Activated CD4-positive, alpha-beta memory T cell treated with anti-CD3 and anti-CD28 coated beads for 36 hours (primary cell): ENCODE measurements at regions of chr3 and their contacts with region 1.

Region 1: GRCh38 chr3:100708967-100709841 is at the start of gene TFG:
- DNase-seq: peak; percentile 98
- H3K4me3 Mint-ChIP-seq: peak within 1 kb of the TSS; percentile 81
- H3K27ac Mint-ChIP-seq: peak within 1 kb of the TSS; percentile 95
- H3K4me1 Mint-ChIP-seq: peaks cover 40% of the 10 kb centered on the region
- H3K27me3 Mint-ChIP-seq: peaks cover 9% of the 10 kb centered on the region
- total RNA-seq, gene TFG: 55.5 to 60.3 TPM

Region 2: GRCh38 chr3:99875929-99876841 is 833.0 kb before region 1 on chr3:
- CTCF ChIA-PET with region 1: no interaction called
- POLR2A ChIA-PET with region 1: no interaction called
- intact Hi-C with region 1: loop called (anchors 5 kb)
- DNase-seq: peak; percentile 73
- H3K4me3 Mint-ChIP-seq: peak overlapping the region; percentile 65
- H3K27ac Mint-ChIP-seq: no peak overlapping the region
- H3K4me1 Mint-ChIP-seq: peaks cover 27% of the 10 kb centered on the region
- H3K27me3 Mint-ChIP-seq: peaks cover 2% of the 10 kb centered on the region

Region 3: DNA sequence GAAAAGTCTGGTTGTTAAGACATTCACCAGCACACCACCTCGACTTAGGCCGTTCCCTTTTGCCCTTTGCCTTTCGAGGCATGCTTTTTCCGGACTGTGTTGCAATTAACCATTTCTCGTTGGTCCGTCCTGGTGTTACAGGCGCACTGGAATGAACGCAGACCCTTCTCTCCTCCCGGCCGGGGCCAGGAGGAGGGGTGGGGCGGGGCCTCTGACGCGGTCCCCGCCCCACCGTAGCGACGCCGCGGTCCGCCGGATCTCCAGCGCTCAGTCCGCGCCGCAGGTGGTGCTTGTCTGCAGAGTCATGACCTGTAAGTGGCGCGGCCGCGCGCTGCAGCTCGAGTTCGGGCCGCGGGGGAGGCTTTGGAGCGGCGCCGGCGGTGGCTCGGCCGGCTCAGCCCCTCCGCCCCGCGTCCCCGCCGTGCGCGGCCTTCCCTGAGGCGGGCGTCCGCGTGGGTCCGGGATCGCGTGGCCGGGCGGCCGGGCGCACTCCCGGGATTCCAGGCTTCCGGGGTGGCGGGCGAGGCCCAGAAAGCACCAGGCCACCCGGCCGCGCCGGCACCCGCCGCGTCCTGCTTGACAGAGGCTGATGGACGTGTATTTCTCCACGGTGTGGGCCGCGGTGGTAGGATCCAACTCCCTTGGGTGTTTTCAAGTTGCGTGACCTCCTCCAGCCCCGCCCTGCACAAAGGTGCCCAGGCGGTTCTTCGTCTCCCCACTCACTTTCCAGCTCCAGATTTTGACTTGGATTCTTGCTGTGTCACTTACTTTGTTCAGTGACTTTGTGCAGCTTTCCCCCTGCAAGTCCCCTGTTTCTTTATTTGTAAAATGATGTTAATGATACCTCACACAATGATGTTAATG is 374.5 kb before region 1 on chr3 and contains the start of gene NIT2:
- CTCF ChIA-PET with region 1: no interaction called
- POLR2A ChIA-PET with region 1: no interaction called
- intact Hi-C with region 1: loop called (anchors 2 kb)
- DNase-seq: peak; percentile 87
- H3K4me3 Mint-ChIP-seq: peak within 1 kb of the TSS; percentile 86
- H3K27ac Mint-ChIP-seq: peak within 1 kb of the TSS; percentile 84
- H3K4me1 Mint-ChIP-seq: peaks cover 21% of the 10 kb centered on the region
- H3K27me3 Mint-ChIP-seq: no peaks in the 10 kb centered on the region
- total RNA-seq, gene NIT2: 65.3 to 65.7 TPM

Region 4: GRCh38 chr3:100449214-100449613 is 260.0 kb before region 1 on chr3:
- CTCF ChIA-PET with region 1: no interaction called
- POLR2A ChIA-PET with region 1: no interaction called
- intact Hi-C with region 1: no loop called
- DNase-seq: no peak
- H3K4me3 Mint-ChIP-seq: no peak overlapping the region
- H3K27ac Mint-ChIP-seq: no peak overlapping the region
- H3K4me1 Mint-ChIP-seq: no peaks in the 10 kb centered on the region
- H3K27me3 Mint-ChIP-seq: no peaks in the 10 kb centered on the region

Region 5: DNA sequence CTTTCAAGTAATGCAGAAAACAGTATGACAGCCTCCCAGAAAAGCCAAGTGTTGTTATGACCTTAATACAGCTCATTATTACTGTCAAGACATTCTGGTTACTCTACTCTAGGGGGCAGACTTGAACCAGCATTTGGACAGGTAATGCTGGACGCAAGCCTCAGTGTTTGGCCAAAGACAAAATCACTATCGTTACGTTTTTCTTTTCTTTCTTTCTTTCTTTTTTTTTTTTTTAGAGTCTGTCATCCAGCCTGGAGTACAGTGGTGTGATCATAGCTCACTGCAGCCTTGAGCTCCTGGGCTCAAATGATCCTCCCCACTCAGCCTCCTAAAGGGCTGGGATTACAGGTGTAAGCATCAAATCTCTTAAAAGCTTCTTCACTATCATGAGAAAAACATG is 246.2 kb before region 1 on chr3:
- CTCF ChIA-PET with region 1: interaction called, 5 read pairs
- POLR2A ChIA-PET with region 1: no interaction called
- intact Hi-C with region 1: loop called (anchors 10 kb)
- DNase-seq: peak; percentile 14
- H3K4me3 Mint-ChIP-seq: no peak overlapping the region
- H3K27ac Mint-ChIP-seq: no peak overlapping the region
- H3K4me1 Mint-ChIP-seq: peaks cover 7% of the 10 kb centered on the region
- H3K27me3 Mint-ChIP-seq: no peaks in the 10 kb centered on the region

Region 6: GRCh38 chr3:100650651-100651611 is 58.3 kb before region 1 on chr3:
- CTCF ChIA-PET with region 1: interaction called, 6 read pairs
- POLR2A ChIA-PET with region 1: interaction called, 3 read pairs
- intact Hi-C with region 1: loop called (anchors 1 kb)
- DNase-seq: peak; percentile 36
- H3K4me3 Mint-ChIP-seq: peak overlapping the region; percentile 18
- H3K27ac Mint-ChIP-seq: peak overlapping the region; percentile 41
- H3K4me1 Mint-ChIP-seq: peaks cover 15% of the 10 kb centered on the region
- H3K27me3 Mint-ChIP-seq: no peaks in the 10 kb centered on the region

Region 7: DNA sequence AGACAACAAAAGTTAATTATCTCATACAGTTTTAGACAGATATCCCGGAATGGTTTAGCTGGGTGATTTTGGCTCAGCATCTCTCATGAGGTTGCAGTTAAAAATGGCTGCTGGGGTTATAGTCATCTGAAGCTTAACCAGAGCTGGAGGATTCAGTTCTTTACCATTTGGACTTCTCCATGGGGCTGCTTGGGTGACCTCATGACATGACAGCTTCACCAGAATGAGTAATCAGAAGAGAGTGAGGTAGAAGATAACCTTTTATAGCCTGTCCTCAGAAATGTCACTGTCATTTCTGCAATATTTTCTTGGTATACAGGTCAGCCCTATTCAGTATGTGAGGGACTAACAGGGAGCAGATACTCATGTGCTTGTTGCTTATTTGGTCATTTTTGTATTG is 31.0 kb after region 1 on chr3:
- CTCF ChIA-PET with region 1: no interaction called
- POLR2A ChIA-PET with region 1: no interaction called
- intact Hi-C with region 1: loop called (anchors 1 kb)
- DNase-seq: peak; percentile 20
- H3K4me3 Mint-ChIP-seq: no peak overlapping the region
- H3K27ac Mint-ChIP-seq: no peak overlapping the region
- H3K4me1 Mint-ChIP-seq: no peaks in the 10 kb centered on the region
- H3K27me3 Mint-ChIP-seq: no peaks in the 10 kb centered on the region

Region 8: DNA sequence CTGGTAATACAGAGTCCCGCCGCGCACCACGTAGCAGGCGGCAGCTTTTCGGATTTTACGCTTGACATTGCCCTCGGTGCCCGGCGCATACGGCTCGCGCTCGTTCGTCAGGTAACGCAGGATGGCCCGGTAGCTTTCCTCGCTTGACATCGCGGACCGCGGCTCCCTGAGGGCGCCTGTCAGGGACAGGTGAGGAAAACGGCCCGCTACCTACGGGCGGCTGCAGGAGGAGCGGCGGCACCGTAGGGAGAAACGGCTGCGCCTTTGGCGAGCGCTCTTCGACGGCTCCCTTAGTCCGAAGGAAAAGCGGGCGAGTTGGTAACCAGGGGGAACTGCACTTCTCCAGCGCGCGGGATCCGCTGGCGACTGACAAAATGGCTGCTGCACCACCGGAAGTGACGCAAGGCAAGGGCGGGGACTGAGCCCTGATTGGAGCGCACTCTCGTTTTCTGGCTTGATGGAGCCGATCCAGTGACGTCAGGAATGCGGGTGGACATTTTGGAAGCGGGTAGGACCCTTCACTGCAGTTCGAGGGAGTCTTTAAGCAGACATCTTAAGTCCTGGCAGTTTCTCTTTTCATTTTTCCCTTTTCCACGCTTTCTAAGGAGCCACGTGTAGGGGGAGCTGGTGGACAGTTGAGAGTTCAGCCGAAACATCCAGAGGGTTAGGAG is 967.7 kb after region 1 on chr3 and contains the start of gene ZBTB11:
- CTCF ChIA-PET with region 1: no interaction called
- POLR2A ChIA-PET with region 1: no interaction called
- intact Hi-C with region 1: loop called (anchors 5 kb)
- DNase-seq: peak; percentile 100
- H3K4me3 Mint-ChIP-seq: peak within 1 kb of the TSS; percentile 93
- H3K27ac Mint-ChIP-seq: peak within 1 kb of the TSS; percentile 91
- H3K4me1 Mint-ChIP-seq: peaks cover 57% of the 10 kb centered on the region
- H3K27me3 Mint-ChIP-seq: no peaks in the 10 kb centered on the region
- total RNA-seq, gene ZBTB11: 28.0 to 30.3 TPM

Region 9: GRCh38 chr3:101690972-101691371 is 981.8 kb after region 1 on chr3:
- CTCF ChIA-PET with region 1: no interaction called
- POLR2A ChIA-PET with region 1: no interaction called
- intact Hi-C with region 1: no loop called
- DNase-seq: peak; percentile 46
- H3K4me3 Mint-ChIP-seq: no peak overlapping the region
- H3K27ac Mint-ChIP-seq: peak overlapping the region; percentile 31
- H3K4me1 Mint-ChIP-seq: peaks cover 21% of the 10 kb centered on the region
- H3K27me3 Mint-ChIP-seq: no peaks in the 10 kb centered on the region